Heart right ventricle (tissue), 16 donors: ENCODE measurements at regions of chr15 and their contacts with region 1.

Region 1: DNA sequence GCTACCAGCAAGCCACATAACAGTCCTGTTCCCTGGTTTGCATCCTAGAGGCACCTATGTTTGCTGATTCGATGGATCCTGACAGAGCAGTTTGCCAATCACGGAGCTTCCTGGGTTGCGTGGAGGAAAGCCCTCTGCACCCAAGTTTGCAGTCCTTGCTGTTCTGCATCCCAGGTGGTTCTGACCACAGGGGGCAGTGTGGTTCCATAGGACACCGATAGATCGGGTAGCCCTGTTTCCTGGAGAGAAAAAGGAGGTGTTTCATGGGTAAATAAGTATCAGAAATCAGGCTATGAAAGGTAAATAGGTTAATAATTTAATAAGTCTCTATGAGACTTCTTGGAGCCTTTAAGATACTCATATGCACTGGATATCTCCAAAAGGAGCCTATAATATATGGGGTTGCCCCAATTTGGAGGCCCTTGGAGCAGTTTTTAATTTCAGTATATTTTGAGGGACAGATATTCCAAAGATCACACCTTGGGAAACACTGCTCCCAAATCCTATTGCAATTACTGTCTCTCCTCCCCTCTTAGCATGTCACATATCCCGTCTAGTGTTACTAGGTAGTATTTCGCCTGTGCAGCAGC is 194.6 kb upstream of the TPM1 start:
- DNase-seq: peak; percentile 74
- ATAC-seq: peak; percentile 57 to 82 (median 75)
- H3K4me3 ChIP-seq: no peak overlapping the region
- H3K27ac ChIP-seq: peak overlapping the region in 5 of 10 donors; percentile 11 to 30 (median 21)
- H3K4me1 ChIP-seq: peaks cover 0 to 49% (median 22%) of the 10 kb centered on the region in 9 donors
- H3K27me3 ChIP-seq: no peaks in the 10 kb centered on the region
- CTCF ChIP-seq: peak; percentile 64 to 87 (median 80)

Region 2: GRCh38 chr15:62739082-62739481 is 108.9 kb before region 1 on chr15:
- intact Hi-C with region 1: no loop called
- DNase-seq: no peak
- ATAC-seq: no peak
- H3K4me3 ChIP-seq: no peak overlapping the region
- H3K27ac ChIP-seq: no peak overlapping the region
- H3K4me1 ChIP-seq: peaks cover 0 to 24% (median 16%) of the 10 kb centered on the region in 9 donors
- H3K27me3 ChIP-seq: no peaks in the 10 kb centered on the region
- CTCF ChIP-seq: no peak

Region 3: GRCh38 chr15:63030101-63030551 is 182.1 kb after region 1 on chr15:
- intact Hi-C with region 1: loop called in 1 of 10 experiments (anchors 10 kb)
- DNase-seq: no peak
- ATAC-seq: peak in 6 of 8 donors; percentile 55 to 83 (median 74)
- H3K4me3 ChIP-seq: no peak overlapping the region
- H3K27ac ChIP-seq: no peak overlapping the region
- H3K4me1 ChIP-seq: peaks cover 0 to 12% (median 0%) of the 10 kb centered on the region in 9 donors
- H3K27me3 ChIP-seq: no peaks in the 10 kb centered on the region
- CTCF ChIP-seq: no peak

Region 4: GRCh38 chr15:63093486-63094205 is 245.7 kb after region 1 on chr15:
- intact Hi-C with region 1: loop called (anchors 2 to 10 kb)
- DNase-seq: peak; percentile 72 to 86
- ATAC-seq: peak; percentile 85 to 96 (median 92)
- H3K4me3 ChIP-seq: no peak overlapping the region
- H3K27ac ChIP-seq: peak overlapping the region in 4 of 10 donors; percentile 28 to 66 (median 39)
- H3K4me1 ChIP-seq: peaks cover 8 to 30% (median 21%) of the 10 kb centered on the region in 9 donors
- H3K27me3 ChIP-seq: no peaks in the 10 kb centered on the region
- CTCF ChIP-seq: peak; percentile 82 to 97 (median 90)